ENCODE measurements at regions of chr11 and their contacts with region 1.

Region 1: GRCh38 chr11:10730151-10730550 is 20.9 kb upstream of the CTR9 start:
- DNase-seq: no peak
- ATAC-seq: no peak

Region 2: GRCh38 chr11:10623797-10624761 is 106.1 kb before region 1 on chr11:
- intact Hi-C with region 1: loop called in 1 of 2 experiments (anchors 5 kb)
- DNase-seq: peak in 1 of 2 donors; percentile 46
- ATAC-seq: peak; percentile 21

Region 3: GRCh38 chr11:10641177-10641911 is 88.8 kb before region 1 on chr11:
- intact Hi-C with region 1: no loop called
- DNase-seq: peak in 1 of 2 donors; percentile 8
- ATAC-seq: no peak

Region 4: GRCh38 chr11:10750838-10751580 is 20.9 kb after region 1 on chr11 and contains the start of gene CTR9:
- intact Hi-C with region 1: no loop called
- DNase-seq: peak; percentile 93 to 95
- ATAC-seq: peak; percentile 95
- total RNA-seq, gene CTR9: 26.9 to 35.0 TPM